ENCODE measurements at regions of chr16 and their contacts with region 1.

Region 1: DNA sequence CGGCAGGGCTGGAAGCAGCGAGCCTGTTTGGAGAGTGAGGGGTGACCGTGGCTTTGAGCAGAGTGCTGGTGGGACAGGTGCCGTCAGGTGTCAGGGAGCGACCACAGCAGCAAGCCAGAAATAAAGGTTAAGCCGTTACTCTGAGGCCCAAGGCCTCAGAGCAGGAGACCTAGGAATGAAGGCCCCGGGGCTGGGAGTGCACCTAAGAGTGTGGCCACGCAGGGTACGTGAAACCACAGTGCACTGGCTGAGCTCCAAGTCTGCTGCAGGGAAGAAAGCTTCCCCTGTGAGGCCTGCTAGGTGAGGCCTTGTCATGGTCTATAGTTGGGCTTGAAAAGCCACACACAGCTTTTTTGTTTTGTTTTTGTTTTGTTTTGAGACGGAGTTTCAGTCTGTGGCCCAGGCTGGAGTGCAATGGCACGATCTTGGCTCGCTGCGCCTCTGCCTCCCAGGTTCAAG is 8.7 kb downstream of the CLUAP1 start:
- DNase-seq: peak; percentile 45
- H3K4me3 Mint-ChIP-seq: no peak overlapping the region
- H3K27ac Mint-ChIP-seq: no peak overlapping the region
- H3K4me1 Mint-ChIP-seq: no peaks in the 10 kb centered on the region
- H3K27me3 Mint-ChIP-seq: no peaks in the 10 kb centered on the region
- CTCF ChIP-seq: no peak

Region 2: DNA sequence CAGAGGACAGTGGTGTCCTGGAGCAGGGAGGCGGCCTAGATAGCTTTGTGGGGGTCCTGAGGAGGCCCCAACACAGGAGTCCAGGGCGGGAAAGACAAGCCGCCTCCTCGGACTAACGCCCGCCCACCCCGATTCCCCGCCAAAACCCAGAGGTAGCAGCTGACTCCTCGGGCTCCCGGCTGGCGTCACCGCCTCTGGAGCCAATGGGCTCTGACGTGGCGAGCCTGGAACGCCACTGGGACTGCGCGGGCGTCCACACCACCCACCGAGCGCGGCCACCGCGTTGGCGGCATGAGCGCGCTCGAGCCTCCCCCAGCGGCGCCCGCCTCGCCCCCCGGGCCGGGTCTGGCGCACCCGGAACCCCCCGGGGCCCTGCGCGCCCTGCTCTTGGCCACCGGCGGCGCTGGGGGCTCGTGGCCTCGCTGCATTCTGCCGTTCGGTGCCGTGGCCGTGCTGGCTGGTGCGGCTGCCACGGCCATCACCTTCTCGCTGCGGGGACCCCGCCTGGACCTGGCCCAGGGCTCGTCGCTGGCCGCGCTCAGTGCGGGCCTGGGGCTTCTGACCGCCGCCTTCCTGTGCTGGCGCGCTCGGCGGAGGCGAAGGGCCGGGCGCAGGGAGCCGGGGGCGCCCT is 1041.9 kb before region 1 on chr16:
- CTCF ChIA-PET with region 1: no interaction called
- intact Hi-C with region 1: no loop called
- DNase-seq: peak; percentile 64
- H3K4me3 Mint-ChIP-seq: peak overlapping the region; percentile 74
- H3K27ac Mint-ChIP-seq: no peak overlapping the region
- H3K4me1 Mint-ChIP-seq: peaks cover 8% of the 10 kb centered on the region
- H3K27me3 Mint-ChIP-seq: peaks cover 33% of the 10 kb centered on the region
- CTCF ChIP-seq: no peak

Region 3: DNA sequence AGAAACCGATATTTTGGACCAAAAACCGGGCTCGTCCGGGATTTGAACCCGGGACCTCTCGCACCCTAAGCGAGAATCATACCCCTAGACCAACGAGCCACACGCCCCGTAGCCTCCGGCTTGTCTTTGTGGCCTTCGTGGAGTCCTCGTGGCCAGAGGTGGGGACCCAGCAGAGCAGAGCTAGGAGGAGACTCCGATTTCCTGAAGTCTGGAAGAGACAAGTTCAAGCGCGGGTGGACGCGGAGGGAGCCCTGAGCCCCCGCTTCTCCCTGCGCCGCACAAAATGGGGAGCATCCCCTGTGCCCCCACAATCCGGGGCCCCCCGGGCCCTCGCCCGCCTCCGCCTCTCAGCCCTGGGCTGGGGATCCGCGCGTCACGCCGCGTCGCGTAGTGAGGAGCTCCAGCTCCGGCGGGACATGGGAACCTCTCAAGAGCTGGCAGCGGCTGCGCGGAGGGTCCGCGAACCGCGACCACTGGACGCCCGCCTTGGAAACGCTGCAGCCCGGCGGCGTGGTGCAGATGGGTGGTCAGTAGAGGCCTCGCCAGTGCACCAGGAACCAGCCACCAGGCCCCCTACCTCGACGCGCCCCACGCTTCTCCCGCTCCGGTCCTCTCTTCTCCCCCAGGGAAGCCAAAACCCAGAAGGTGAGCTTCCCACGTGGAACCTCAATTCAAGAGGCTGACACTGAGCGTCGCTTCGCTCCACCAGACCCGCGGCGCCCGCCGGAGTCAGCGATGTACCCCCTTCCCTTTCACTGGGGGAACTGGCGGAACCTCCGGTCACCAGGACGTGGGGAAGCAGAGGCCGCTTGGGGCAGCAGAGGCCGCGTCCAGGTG is 326.7 kb before region 1 on chr16:
- CTCF ChIA-PET with region 1: no interaction called
- intact Hi-C with region 1: loop called (anchors 10 kb)
- DNase-seq: peak; percentile 88
- H3K4me3 Mint-ChIP-seq: peak overlapping the region; percentile 81
- H3K27ac Mint-ChIP-seq: peak overlapping the region; percentile 100
- H3K4me1 Mint-ChIP-seq: peaks cover 32% of the 10 kb centered on the region
- H3K27me3 Mint-ChIP-seq: peaks cover 86% of the 10 kb centered on the region
- CTCF ChIP-seq: peak; percentile 63

Region 4: DNA sequence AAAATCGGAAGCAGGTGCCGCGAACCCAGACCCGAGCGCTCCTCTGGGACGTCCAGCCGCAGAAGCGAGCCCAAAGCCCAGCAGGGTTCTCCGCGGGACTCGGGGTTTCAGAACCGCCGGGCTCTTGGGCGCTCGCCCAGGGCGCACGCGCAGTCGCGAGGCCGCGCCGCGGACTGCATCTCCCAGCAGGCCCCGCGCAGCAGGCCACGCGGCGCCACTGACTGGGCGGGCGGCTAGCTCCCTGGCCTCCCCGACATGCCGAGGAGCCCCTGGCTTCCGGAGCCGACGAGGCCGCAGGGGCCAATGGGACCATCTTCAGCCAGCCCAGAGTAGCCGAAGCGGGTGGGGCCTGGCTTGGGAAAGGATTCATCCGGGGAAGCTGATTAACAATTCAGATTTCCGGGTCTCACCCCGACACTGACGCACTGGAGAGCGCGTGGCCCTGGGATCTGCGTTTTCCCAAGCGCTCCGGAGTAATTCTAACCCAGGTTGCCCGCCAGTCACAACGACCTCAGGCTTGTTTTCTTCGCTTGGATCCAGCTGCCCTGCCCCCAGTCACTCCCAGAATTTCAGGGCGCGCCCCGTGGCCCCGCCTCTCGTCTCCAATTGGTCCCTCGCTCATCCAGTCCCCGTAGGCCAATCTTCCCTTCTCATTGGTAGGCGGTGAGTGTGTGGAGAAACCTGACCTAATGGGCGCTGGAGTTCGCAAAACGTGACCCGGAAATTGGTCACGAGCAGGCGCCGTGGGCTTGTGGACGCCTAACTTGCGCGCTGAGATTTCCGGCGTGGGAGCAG is 226.6 kb before region 1 on chr16 and contains the start of gene ZNF263:
- CTCF ChIA-PET with region 1: no interaction called
- intact Hi-C with region 1: loop called (anchors 10 kb)
- DNase-seq: peak; percentile 98
- H3K4me3 Mint-ChIP-seq: peak within 1 kb of the TSS; percentile 90
- H3K27ac Mint-ChIP-seq: peak within 1 kb of the TSS; percentile 95
- H3K4me1 Mint-ChIP-seq: peaks cover 10% of the 10 kb centered on the region
- H3K27me3 Mint-ChIP-seq: peaks cover 11% of the 10 kb centered on the region
- CTCF ChIP-seq: no peak
- total RNA-seq, gene ZNF263: 46.9 and 51.2 TPM in 2 replicates

Measured in Calu3 (cell line).